ENCODE measurements at regions of chr9 and their contacts with region 1.

Region 1: DNA sequence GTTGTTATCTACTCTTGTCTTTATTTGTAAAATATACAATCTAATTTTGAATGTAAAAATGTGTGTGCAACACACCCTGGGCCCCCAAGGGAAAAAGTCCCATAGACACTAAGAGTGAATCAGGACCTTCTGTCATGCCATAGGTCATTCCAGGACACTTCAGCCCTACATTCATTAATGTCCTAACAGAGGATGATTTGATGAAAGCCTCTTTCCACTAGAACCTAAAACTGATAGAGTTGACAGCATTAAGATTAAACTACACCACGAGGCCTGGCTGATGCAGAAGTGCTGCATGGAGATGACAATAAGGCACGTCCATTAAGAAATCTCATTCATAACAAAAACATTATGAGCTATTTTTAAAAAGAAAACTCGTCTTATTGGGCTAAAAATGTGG is 46.2 kb downstream of the FRMD3 start:
- DNase-seq: no peak
- H3K4me3 ChIP-seq: no peak overlapping the region
- H3K27ac ChIP-seq: no peak overlapping the region
- H3K4me1 ChIP-seq: no peaks in the 10 kb centered on the region
- H3K27me3 ChIP-seq: no peaks in the 10 kb centered on the region
- CTCF ChIP-seq: no peak

Region 2: GRCh38 chr9:83533296-83533695 is 41.3 kb after region 1 on chr9:
- CTCF ChIA-PET with region 1: no interaction called
- POLR2A ChIA-PET with region 1: no interaction called
- intact Hi-C with region 1: loop called (anchors 5 kb)
- DNase-seq: no peak
- H3K4me3 ChIP-seq: no peak overlapping the region
- H3K27ac ChIP-seq: no peak overlapping the region
- H3K4me1 ChIP-seq: peaks cover 8% of the 10 kb centered on the region
- H3K27me3 ChIP-seq: peaks cover 48% of the 10 kb centered on the region
- CTCF ChIP-seq: no peak

Region 3: DNA sequence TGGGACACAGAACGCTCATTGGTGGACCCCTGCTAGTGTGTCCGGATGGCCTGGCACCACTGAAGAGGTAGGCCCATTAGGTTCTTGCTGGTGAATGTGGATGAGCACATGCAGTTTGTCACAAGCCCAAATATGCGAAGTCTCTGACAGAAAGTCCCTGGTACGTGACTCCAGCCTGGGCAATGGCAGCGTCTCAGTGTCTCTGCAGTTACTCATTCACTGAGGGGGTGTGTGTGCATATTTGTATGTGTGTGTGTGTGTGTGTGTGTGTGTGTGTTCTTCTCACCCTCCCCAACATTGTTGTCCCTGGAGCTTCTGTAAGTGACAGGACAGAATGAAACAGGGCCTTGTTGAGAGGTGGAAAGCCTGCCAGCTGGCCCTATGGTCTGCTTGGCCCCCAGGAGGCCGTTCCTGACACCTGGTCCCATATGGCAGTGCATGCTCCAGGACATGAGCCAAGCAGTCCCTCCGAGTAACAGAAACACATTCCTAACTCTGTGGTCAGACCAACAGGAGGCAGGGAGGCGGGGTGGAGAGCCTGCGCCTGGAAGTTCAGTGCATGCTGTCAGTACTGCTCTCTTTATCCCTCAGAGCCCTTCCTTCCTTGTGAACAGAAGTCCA is 678.6 kb after region 1 on chr9:
- CTCF ChIA-PET with region 1: no interaction called
- POLR2A ChIA-PET with region 1: no interaction called
- intact Hi-C with region 1: no loop called
- DNase-seq: no peak
- H3K4me3 ChIP-seq: no peak overlapping the region
- H3K27ac ChIP-seq: no peak overlapping the region
- H3K4me1 ChIP-seq: no peaks in the 10 kb centered on the region
- H3K27me3 ChIP-seq: no peaks in the 10 kb centered on the region
- CTCF ChIP-seq: no peak